GM12878 (cell line): ENCODE measurements at regions of chr15 and their contacts with region 1.

Region 1: GRCh38 chr15:45397116-45397665 is 18.8 kb upstream of the GATM start:
- DNase-seq: no peak
- ATAC-seq: no peak
- H3K4me3 ChIP-seq: no peak overlapping the region
- H3K27ac ChIP-seq: no peak overlapping the region
- H3K4me1 ChIP-seq: peaks cover 13% of the 10 kb centered on the region
- H3K27me3 ChIP-seq: no peaks in the 10 kb centered on the region
- CTCF ChIP-seq: no peak
- EP300 ChIP-seq: no peak
- POLR2A ChIP-seq: no peak
- RAD21 ChIP-seq: no peak

Region 2: GRCh38 chr15:45307230-45307924 is 89.8 kb before region 1 on chr15:
- CTCF ChIA-PET with region 1: interaction called, 67 read pairs
- POLR2A ChIA-PET with region 1: interaction called, 4 read pairs
- RAD21 ChIA-PET with region 1: interaction called, 21 read pairs
- SMC1A ChIA-PET with region 1: interaction called, 18 read pairs
- in situ Hi-C with region 1: loop called (anchors 5 kb)
- intact Hi-C with region 1: loop called (anchors 1 kb)
- DNase-seq: peak; percentile 31
- ATAC-seq: peak; percentile 71
- H3K4me3 ChIP-seq: peak overlapping the region; percentile 60; the same call in 1 of the 2 replicates
- H3K27ac ChIP-seq: no peak overlapping the region
- H3K4me1 ChIP-seq: no peaks in the 10 kb centered on the region
- H3K27me3 ChIP-seq: no peaks in the 10 kb centered on the region
- CTCF ChIP-seq: peak; percentile 39 to 65 (median 58); a peak in 5 of 6 replicates
- EP300 ChIP-seq: no peak
- POLR2A ChIP-seq: no peak
- RAD21 ChIP-seq: peak; percentile 58

Region 3: DNA sequence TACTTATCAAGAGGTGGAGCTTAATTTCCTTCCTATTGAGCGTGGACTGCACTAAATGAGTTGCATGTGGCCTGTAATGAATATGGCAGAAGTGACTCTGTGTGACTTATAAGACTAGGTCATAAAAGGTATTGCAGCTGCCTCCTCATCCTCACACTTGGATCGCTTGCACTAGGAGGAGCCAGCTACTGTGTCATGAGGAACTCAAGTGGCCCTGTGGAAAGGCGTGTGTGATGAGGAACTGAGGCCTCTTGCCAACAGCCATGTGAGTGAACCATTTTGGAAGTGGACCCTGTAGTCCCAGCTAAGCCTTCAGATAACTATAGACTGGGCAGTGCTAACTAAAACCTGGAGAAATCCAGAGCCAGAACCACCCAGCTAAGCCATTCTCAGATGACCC is 132.4 kb after region 1 on chr15:
- CTCF ChIA-PET with region 1: no interaction called
- POLR2A ChIA-PET with region 1: no interaction called
- RAD21 ChIA-PET with region 1: no interaction called
- SMC1A ChIA-PET with region 1: no interaction called
- in situ Hi-C with region 1: no loop called
- intact Hi-C with region 1: no loop called
- DNase-seq: no peak
- ATAC-seq: no peak
- H3K4me3 ChIP-seq: no peak overlapping the region
- H3K27ac ChIP-seq: no peak overlapping the region
- H3K4me1 ChIP-seq: no peaks in the 10 kb centered on the region
- H3K27me3 ChIP-seq: no peaks in the 10 kb centered on the region
- CTCF ChIP-seq: no peak
- EP300 ChIP-seq: no peak
- POLR2A ChIP-seq: no peak
- RAD21 ChIP-seq: no peak